ENCODE measurements at regions of chr17 and their contacts with region 1.

Region 1: GRCh38 chr17:80082403-80083135 is 18.8 kb upstream of the GAA start:
- DNase-seq: peak; percentile 71 to 91
- H3K4me3 ChIP-seq: no peak overlapping the region
- CTCF ChIP-seq: peak in 1 of 3 donors; percentile 67
- POLR2A ChIP-seq: no peak

Region 2: DNA sequence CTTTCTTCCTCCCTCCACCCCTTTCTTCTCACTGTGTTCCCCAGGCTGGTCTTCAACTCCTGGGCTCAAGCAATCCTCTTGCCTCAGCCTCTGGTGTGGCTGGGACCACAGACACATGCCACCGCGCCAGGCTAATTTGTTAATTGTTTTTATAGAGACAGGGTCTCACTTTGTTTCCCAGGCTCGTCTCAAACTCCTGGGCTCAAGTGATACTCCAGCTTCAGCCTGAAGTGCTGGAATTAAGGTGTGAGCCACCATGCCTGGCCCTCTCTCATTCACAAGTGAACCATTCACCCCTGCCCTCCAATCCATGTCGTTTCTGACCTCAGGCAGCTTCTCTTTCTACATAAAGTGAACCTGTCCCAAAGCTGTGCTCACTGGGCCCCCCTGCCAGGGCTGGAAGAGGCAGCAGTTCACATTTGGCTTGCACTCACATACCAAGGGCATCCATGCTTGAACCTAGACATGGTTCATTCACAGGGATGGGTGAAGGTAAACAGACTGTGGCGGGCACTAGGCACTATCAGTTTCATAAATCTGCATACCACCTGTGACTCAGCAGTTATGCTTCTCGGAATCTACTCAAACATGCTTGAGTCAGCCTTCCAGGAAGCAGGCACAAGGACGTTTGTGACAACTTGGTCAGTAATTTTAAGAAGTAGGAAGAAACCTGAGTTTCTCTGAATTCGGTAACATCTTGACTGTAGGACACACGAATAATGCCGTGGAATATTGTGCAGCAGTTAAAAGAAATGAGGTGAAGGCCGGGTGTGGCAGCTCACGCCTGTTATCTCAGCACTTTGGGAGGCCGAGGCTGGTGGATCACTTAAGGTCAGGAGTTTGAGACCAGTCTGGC is 172.1 kb after region 1 on chr17:
- intact Hi-C with region 1: loop called (anchors 5 kb)
- DNase-seq: no peak
- H3K4me3 ChIP-seq: no peak overlapping the region
- CTCF ChIP-seq: no peak
- POLR2A ChIP-seq: no peak

Region 3: DNA sequence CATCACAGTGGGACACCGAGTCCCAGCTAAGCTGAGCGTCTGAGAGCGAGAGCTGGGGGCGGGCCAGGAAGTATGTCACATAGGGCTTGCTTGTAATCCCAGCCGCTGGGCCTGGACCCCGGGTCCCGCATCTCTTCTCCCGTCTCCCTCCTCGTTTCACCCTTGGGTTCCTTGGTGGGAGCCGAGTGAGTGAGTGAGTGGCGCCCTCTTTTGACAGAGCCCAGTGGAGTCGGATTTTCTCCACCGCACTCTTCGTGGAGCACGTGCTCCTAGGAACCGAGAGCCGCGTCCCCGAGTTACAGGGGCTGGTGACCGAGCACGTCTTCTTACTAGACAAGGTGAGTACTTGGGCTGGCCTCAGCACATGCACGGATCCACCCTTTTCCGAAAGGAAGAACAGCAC is 281.6 kb after region 1 on chr17:
- intact Hi-C with region 1: loop called (anchors 10 kb)
- DNase-seq: no peak
- H3K4me3 ChIP-seq: no peak overlapping the region
- CTCF ChIP-seq: no peak
- POLR2A ChIP-seq: no peak